ENCODE measurements at regions of chr6 and their contacts with region 1.

Region 1: GRCh38 chr6:26025894-26026832 is 61.1 kb upstream of the HFE start:
- DNase-seq: peak; percentile 75 to 98 (median 88)
- ATAC-seq: peak; percentile 45
- H3K4me3 ChIP-seq: peak overlapping the region; percentile 70
- H3K4me3 Mint-ChIP-seq: peak overlapping the region; percentile 90
- H3K27ac ChIP-seq: peak overlapping the region; percentile 86 to 88
- H3K27ac Mint-ChIP-seq: peak overlapping the region; percentile 97
- H3K4me1 ChIP-seq: peaks cover 34% of the 10 kb centered on the region
- H3K4me1 Mint-ChIP-seq: peaks cover 42% of the 10 kb centered on the region
- H3K27me3 ChIP-seq: no peaks in the 10 kb centered on the region
- H3K27me3 Mint-ChIP-seq: no peaks in the 10 kb centered on the region
- CTCF ChIP-seq: peak; percentile 86

Region 2: GRCh38 chr6:26012061-26012460 is 14.1 kb before region 1 on chr6:
- CTCF ChIA-PET with region 1: interaction called, 26 read pairs
- POLR2A ChIA-PET with region 1: interaction called, 71 read pairs
- intact Hi-C with region 1: no loop called
- DNase-seq: no peak
- ATAC-seq: no peak
- H3K4me3 ChIP-seq: no peak overlapping the region
- H3K4me3 Mint-ChIP-seq: no peak overlapping the region
- H3K27ac ChIP-seq: no peak overlapping the region
- H3K27ac Mint-ChIP-seq: no peak overlapping the region
- H3K4me1 ChIP-seq: peaks cover 4% of the 10 kb centered on the region
- H3K4me1 Mint-ChIP-seq: peaks cover 5% of the 10 kb centered on the region
- H3K27me3 ChIP-seq: no peaks in the 10 kb centered on the region
- H3K27me3 Mint-ChIP-seq: no peaks in the 10 kb centered on the region
- CTCF ChIP-seq: no peak

Region 3: GRCh38 chr6:26097268-26097875 is 71.2 kb after region 1 on chr6:
- CTCF ChIA-PET with region 1: interaction called, 7 read pairs
- POLR2A ChIA-PET with region 1: interaction called, 53 read pairs
- intact Hi-C with region 1: loop called (anchors 1 to 2 kb)
- DNase-seq: peak; percentile 50 to 87 (median 57)
- ATAC-seq: peak; percentile 86
- H3K4me3 ChIP-seq: no peak overlapping the region
- H3K4me3 Mint-ChIP-seq: no peak overlapping the region
- H3K27ac ChIP-seq: no peak overlapping the region
- H3K27ac Mint-ChIP-seq: no peak overlapping the region
- H3K4me1 ChIP-seq: no peaks in the 10 kb centered on the region
- H3K4me1 Mint-ChIP-seq: peaks cover 5% of the 10 kb centered on the region
- H3K27me3 ChIP-seq: no peaks in the 10 kb centered on the region
- H3K27me3 Mint-ChIP-seq: peaks cover 4% of the 10 kb centered on the region
- CTCF ChIP-seq: peak; percentile 78

Region 4: GRCh38 chr6:26234421-26235296 is 208.5 kb after region 1 on chr6:
- CTCF ChIA-PET with region 1: interaction called, 3 read pairs
- POLR2A ChIA-PET with region 1: interaction called, 45 read pairs
- intact Hi-C with region 1: no loop called
- DNase-seq: peak; percentile 46 to 96 (median 67)
- ATAC-seq: peak; percentile 73
- H3K4me3 ChIP-seq: peak overlapping the region; percentile 66
- H3K4me3 Mint-ChIP-seq: peak overlapping the region; percentile 100
- H3K27ac ChIP-seq: peak overlapping the region; percentile 78 to 87
- H3K27ac Mint-ChIP-seq: peak overlapping the region; percentile 99
- H3K4me1 ChIP-seq: peaks cover 19% of the 10 kb centered on the region
- H3K4me1 Mint-ChIP-seq: peaks cover 42% of the 10 kb centered on the region
- H3K27me3 ChIP-seq: no peaks in the 10 kb centered on the region
- H3K27me3 Mint-ChIP-seq: peaks cover 8% of the 10 kb centered on the region
- CTCF ChIP-seq: no peak

Region 5: DNA sequence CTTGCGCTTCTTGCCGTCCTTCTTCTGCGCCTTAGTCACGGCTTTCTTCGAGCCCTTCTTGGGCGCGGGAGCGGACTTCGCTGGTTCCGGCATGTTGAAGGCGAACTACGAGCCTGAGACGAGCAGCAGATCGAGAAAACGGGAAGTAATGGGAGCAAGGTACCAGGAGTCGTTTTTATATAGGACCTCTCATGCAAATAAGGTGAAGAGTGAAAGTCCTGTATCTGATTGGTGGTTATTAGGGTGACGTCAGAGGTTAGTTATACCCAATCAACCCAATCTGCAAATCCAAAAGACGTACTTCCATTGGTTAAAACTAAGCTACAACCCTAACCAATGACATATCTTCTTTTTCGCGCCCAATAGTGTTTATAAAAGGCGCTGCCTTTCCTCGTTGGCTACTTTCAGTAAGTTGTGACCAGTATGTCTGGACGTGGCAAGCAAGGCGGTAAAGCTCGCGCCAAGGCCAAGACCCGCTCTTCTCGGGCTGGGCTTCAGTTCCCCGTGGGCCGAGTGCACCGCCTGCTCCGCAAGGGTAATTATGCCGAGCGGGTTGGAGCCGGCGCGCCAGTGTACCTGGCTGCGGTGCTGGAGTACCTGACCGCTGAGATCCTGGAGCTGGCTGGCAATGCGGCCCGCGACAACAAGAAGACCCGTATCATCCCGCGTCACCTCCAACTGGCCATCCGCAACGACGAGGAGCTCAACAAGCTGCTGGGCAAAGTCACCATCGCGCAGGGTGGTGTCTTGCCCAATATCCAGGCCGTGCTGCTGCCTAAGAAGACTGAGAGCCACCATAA is 1120.7 kb after region 1 on chr6:
- CTCF ChIA-PET with region 1: no interaction called
- POLR2A ChIA-PET with region 1: interaction called, 63 read pairs
- intact Hi-C with region 1: no loop called
- DNase-seq: peak; percentile 61 to 99 (median 72)
- ATAC-seq: peak; percentile 86
- H3K4me3 ChIP-seq: peak overlapping the region; percentile 69
- H3K4me3 Mint-ChIP-seq: no peak overlapping the region
- H3K27ac ChIP-seq: peak overlapping the region; percentile 84 to 97
- H3K27ac Mint-ChIP-seq: no peak overlapping the region
- H3K4me1 ChIP-seq: peaks cover 17% of the 10 kb centered on the region
- H3K4me1 Mint-ChIP-seq: peaks cover 11% of the 10 kb centered on the region
- H3K27me3 ChIP-seq: no peaks in the 10 kb centered on the region
- H3K27me3 Mint-ChIP-seq: no peaks in the 10 kb centered on the region
- CTCF ChIP-seq: no peak

Region 6: DNA sequence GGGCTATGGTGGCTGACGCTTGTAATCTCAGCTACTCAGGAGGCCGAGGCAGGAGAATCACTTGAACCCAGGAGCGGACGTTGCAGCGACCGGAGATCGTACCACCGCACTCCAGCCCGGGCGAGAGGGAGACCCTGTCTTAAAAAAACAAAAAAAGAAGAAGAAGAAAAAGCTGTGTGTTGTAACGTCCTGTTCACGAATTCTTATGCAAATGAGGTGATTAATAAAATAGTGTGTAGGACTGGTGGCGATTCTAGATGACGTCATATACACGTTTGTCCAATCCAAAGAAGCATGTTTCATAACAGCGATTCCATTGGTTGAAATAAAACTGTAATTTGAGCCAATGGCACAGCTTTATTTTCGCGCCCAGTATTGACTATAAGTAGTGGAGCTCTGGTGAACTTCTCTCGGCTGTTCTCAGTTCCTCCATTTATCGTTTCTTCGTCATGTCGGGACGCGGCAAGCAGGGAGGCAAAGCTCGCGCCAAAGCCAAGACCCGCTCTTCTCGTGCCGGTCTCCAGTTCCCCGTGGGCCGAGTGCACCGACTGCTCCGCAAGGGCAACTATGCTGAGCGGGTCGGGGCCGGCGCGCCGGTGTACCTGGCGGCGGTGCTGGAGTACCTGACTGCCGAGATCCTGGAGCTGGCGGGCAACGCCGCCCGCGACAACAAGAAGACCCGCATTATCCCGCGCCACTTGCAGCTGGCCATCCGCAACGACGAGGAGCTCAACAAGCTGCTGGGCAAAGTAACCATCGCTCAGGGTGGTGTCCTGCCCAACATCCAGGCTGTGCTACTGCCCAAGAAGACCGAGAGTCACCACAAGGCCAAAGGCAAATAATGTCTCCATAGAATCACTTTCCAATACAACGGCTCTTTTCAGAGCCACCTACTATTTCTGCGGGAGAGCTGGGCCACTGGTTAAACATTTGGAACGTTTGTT is 1839.0 kb after region 1 on chr6:
- CTCF ChIA-PET with region 1: interaction called, 3 read pairs
- POLR2A ChIA-PET with region 1: interaction called, 42 read pairs
- intact Hi-C with region 1: no loop called
- DNase-seq: peak in 13 of 14 experiments; percentile 35 to 97 (median 61)
- ATAC-seq: peak; percentile 83
- H3K4me3 ChIP-seq: peak overlapping the region; percentile 59
- H3K4me3 Mint-ChIP-seq: peak overlapping the region; percentile 100
- H3K27ac ChIP-seq: peak overlapping the region; percentile 54 to 78
- H3K27ac Mint-ChIP-seq: peak overlapping the region; percentile 93
- H3K4me1 ChIP-seq: peaks cover 38% of the 10 kb centered on the region
- H3K4me1 Mint-ChIP-seq: peaks cover 41% of the 10 kb centered on the region
- H3K27me3 ChIP-seq: no peaks in the 10 kb centered on the region
- H3K27me3 Mint-ChIP-seq: peaks cover 3% of the 10 kb centered on the region
- CTCF ChIP-seq: no peak